Esophagus squamous epithelium (tissue), 5 donors: ENCODE measurements at regions of chr1 and their contacts with region 1.

Region 1: GRCh38 chr1:221203224-221204054 is 324.2 kb downstream of the HLX start:
- DNase-seq: peak; percentile 19
- H3K4me3 ChIP-seq: no peak overlapping the region
- H3K27ac ChIP-seq: peak overlapping the region in 3 of 4 donors; percentile 23 to 63 (median 62)
- H3K4me1 ChIP-seq: no peaks in the 10 kb centered on the region
- H3K27me3 ChIP-seq: no peaks in the 10 kb centered on the region
- CTCF ChIP-seq: peak; percentile 65 to 89 (median 72)
- POLR2A ChIP-seq: no peak

Region 2: DNA sequence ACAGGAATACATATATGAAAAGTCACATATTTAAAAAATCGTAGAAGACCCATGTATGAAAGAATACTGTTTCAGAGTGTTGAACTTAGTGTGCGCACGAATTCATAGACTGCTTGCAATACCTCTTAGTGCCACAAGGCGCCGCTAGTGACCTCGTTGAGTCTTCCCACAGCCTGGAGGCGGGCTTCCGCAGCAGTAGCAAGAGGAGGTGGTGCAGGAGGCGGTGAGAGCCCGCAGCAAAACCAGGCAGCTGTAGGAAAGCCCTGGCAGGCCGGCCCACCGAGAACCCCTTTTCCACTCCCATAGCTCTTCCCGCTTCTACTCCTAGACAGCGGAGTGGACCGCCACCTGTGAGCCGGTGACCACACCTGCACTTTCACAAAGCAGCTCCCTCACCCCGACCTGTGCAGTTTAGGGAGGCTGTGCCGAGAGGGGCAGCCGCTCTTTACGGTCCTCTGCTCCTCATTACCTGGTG is 393.2 kb before region 1 on chr1:
- intact Hi-C with region 1: loop called (anchors 10 kb)
- DNase-seq: peak; percentile 8
- H3K4me3 ChIP-seq: peak overlapping the region in 2 of 4 donors; percentile 23 to 58
- H3K27ac ChIP-seq: no peak overlapping the region
- H3K4me1 ChIP-seq: peaks cover 0 to 7% (median 0%) of the 10 kb centered on the region in 3 donors
- H3K27me3 ChIP-seq: no peaks in the 10 kb centered on the region
- CTCF ChIP-seq: peak; percentile 57 to 95 (median 92)
- POLR2A ChIP-seq: no peak

Region 3: DNA sequence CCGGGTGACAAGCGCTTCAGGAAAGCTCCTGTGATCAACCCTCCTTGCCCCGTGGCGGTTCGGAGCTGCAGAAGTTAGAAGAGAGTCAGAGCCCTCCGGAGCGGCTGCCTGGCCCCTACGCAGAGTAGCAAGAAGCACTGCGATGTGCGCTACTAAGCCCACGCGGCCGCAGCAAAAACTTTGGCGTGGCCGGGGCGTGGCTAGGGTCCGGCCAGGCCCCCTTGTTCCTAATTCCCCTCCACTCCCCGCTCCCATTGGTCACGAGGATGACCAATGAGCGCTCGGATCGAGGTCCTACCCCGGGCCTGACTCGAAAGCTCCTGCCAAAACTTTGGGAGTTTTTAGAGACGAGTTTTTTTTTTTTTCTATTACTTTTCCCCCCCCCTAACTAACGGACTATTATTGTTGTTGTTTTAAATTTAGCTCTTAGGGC is 324.3 kb before region 1 on chr1 and contains the start of gene HLX:
- intact Hi-C with region 1: loop called (anchors 5 kb)
- DNase-seq: peak; percentile 60
- H3K4me3 ChIP-seq: peak within 1 kb of the TSS; percentile 51 to 91 (median 66)
- H3K27ac ChIP-seq: peak within 1 kb of the TSS; percentile 78 to 95 (median 90)
- H3K4me1 ChIP-seq: peaks cover 21 to 74% (median 24%) of the 10 kb centered on the region in 3 donors
- H3K27me3 ChIP-seq: peaks cover 0 to 92% (median 15%) of the 10 kb centered on the region in 4 donors
- CTCF ChIP-seq: no peak
- POLR2A ChIP-seq: peak in 2 of 4 donors; percentile 82 to 83
- total RNA-seq, gene HLX: 0.23 to 7.2 (median 0.97) TPM

Region 4: DNA sequence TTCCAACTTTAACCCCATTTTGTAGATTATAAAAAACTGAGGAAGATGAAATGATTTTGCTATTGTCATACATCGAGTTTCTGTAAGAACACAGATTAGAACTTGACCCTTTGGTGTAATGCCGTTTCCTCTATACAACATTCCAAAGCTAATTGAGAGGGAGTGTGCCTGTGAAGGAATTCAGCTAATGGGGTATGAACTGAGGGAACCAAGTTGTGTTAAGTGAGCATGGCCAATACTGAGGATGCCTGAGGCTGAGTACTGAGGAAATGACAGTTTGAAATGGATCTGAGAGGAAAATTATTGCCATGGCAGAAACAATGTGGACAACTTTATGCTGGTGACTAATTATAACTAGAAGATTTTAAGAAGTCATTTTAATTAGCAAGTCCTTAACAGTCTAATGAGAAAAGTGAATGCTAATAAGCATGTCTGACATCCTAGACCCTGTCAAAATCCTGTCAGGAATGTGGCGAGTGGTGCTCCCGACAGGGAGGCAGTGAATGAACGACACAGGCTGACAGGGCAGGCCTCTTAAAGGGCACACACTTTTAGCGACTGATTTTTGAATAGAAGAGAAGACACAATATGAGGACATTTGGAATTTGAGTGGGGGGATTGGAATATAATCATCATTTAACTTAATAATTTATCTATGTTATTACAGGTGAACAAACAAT is 61.7 kb before region 1 on chr1:
- intact Hi-C with region 1: no loop called
- DNase-seq: no peak
- H3K4me3 ChIP-seq: no peak overlapping the region
- H3K27ac ChIP-seq: no peak overlapping the region
- H3K4me1 ChIP-seq: no peaks in the 10 kb centered on the region
- H3K27me3 ChIP-seq: no peaks in the 10 kb centered on the region
- CTCF ChIP-seq: no peak
- POLR2A ChIP-seq: no peak

Region 5: GRCh38 chr1:221335161-221336101 is 132.0 kb after region 1 on chr1:
- intact Hi-C with region 1: no loop called
- DNase-seq: no peak
- H3K4me3 ChIP-seq: peak overlapping the region in 1 of 4 donors; percentile 8
- H3K27ac ChIP-seq: peak overlapping the region; percentile 55 to 85 (median 78)
- H3K4me1 ChIP-seq: peaks cover 0 to 30% (median 8%) of the 10 kb centered on the region in 3 donors
- H3K27me3 ChIP-seq: no peaks in the 10 kb centered on the region
- CTCF ChIP-seq: no peak
- POLR2A ChIP-seq: no peak